Breast epithelium (tissue), 4 donors: ENCODE measurements at regions of chr11 and their contacts with region 1.

Region 1: DNA sequence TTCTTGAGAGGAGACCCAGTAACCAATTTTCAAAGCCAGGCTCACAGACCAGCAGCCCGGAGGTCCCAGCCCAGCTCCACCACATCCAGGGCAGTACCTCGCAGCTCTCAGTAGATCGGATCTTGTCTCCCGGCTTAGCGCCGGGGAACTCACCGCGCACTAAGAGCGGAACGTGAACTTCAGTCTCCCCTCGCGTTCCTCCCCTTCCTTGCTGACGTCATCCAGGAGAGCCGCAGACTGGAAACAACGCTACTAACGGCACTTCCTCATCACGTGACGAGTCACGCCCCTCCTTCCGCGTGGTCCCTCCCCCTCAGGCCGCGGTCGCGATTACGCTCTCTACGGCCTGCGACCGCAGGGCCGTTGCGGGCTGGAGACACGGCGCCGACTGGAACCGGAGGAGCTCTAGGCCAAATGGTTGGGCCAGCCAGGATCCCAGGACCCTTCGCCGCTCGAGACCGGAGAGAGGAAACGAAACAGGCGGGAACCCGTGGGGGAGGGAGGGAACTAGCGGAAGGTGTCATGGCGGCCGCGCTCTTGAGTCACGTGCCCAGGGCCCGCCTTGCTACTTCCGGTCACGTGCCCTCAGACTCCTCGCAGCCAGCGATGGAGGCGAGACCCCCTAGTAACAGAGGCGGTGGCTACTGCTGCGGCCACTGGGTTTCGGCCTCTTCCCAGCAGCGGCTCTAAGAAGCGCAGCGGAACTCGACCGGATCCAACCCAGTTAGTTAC is at the starts of genes GTF2H1 and HPS5:
- DNase-seq: peak; percentile 94 to 96
- H3K4me3 ChIP-seq: peak within 1 kb of the TSS; percentile 84 to 92 (median 88)
- H3K27ac ChIP-seq: peak within 1 kb of the TSS; percentile 99
- H3K4me1 ChIP-seq: peaks cover 0 to 21% of the 10 kb centered on the region in 2 donors
- H3K27me3 ChIP-seq: no peaks in the 10 kb centered on the region
- CTCF ChIP-seq: peak in 1 of 3 donors; percentile 11
- POLR2A ChIP-seq: peak; percentile 85
- total RNA-seq, gene GTF2H1: 73.1 to 83.7 (median 74.4) TPM
- total RNA-seq, gene HPS5: 18.7 to 166 (median 57.0) TPM

Region 2: DNA sequence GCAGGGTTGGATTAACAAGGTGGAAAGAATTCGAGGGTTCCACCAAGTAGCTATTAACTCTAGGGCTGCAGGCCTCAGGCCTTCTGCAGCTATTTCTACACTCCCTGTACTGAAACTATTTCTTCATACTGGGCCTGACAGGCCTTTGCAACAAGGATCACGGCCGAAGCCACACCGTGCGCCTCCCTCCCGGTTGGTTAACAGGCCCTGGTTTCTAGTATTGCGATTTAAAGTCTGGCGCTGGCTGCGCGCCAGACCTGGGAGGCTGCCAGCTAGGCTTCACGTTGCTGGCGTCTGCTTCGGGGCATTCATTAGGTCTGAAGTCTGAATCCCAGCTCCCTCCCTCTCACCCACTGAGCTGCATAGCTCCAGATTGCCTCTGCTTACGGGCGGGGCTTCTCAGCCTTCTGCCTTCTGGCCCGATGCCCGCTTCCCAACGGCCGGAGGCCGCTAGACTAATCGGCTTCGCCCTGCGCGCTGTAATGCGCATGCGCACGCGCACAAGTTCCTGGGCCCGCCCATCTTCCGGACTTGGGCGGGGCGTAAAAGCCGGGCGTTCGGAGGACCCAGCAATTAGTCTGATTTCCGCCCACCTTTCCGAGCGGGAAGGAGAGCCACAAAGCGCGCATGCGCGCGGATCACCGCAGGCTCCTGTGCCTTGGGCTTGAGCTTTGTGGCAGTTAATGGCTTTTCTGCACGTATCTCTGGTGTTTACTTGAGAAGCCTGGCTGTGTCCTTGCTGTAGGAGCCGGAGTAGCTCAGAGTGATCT is 73.8 kb after region 1 on chr11:
- intact Hi-C with region 1: loop called (anchors 10 kb)
- DNase-seq: peak; percentile 97
- H3K4me3 ChIP-seq: peak overlapping the region; percentile 63 to 97 (median 78)
- H3K27ac ChIP-seq: peak overlapping the region; percentile 90 to 99
- H3K4me1 ChIP-seq: no peaks in the 10 kb centered on the region
- H3K27me3 ChIP-seq: no peaks in the 10 kb centered on the region
- CTCF ChIP-seq: no peak
- POLR2A ChIP-seq: no peak

Region 3: GRCh38 chr11:18526521-18527296 is 204.6 kb after region 1 on chr11 and contains the start of gene TSG101:
- intact Hi-C with region 1: loop called (anchors 5 kb)
- DNase-seq: peak; percentile 88 to 93
- H3K4me3 ChIP-seq: peak within 1 kb of the TSS; percentile 84 to 97 (median 86)
- H3K27ac ChIP-seq: peak within 1 kb of the TSS; percentile 91 to 98
- H3K4me1 ChIP-seq: no peaks in the 10 kb centered on the region
- H3K27me3 ChIP-seq: no peaks in the 10 kb centered on the region
- CTCF ChIP-seq: no peak
- POLR2A ChIP-seq: peak; percentile 80
- total RNA-seq, gene TSG101: 66.5 to 114 (median 72.8) TPM